Activated CD8-positive, alpha-beta T cell treated with anti-CD3 and anti-CD28 coated beads for 36 hours (primary cell): ENCODE measurements at regions of chr6 and their contacts with region 1.

Region 1: DNA sequence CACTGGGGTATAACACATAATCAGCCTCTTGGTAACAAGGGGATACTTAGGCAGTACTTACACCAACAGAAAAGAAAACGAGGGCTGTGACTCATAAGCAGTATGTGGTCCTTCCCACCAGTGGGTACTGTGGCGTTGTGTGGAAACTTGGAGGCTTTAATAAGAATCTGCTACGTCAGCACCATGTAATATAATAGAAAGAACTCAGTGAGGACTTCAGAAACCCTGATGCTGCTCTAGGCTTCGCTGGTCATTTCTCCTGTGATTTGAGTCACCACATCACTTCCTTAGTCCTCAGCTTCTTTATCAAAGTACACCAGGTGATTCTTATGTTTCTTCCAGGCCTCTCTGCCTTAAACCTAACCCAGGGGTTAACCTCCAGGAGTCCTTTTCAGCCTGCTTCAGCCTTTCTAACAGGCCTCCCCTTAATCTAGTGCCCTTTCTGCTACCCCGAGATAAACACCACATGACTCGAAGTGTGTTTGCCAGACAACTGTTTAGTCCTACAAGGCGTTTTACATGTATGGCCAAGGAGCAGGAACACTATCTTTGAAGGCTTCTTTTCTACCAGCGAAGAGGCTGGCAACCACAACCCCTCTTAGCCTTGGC is 68.5 kb downstream of the FYN start:
- DNase-seq: peak; percentile 94
- ATAC-seq: peak; percentile 57
- H3K4me3 Mint-ChIP-seq: peak overlapping the region; percentile 63
- H3K27ac Mint-ChIP-seq: peak overlapping the region; percentile 99
- H3K4me1 Mint-ChIP-seq: peaks cover 95% of the 10 kb centered on the region
- H3K27me3 Mint-ChIP-seq: no peaks in the 10 kb centered on the region
- CTCF ChIP-seq: no peak

Region 2: DNA sequence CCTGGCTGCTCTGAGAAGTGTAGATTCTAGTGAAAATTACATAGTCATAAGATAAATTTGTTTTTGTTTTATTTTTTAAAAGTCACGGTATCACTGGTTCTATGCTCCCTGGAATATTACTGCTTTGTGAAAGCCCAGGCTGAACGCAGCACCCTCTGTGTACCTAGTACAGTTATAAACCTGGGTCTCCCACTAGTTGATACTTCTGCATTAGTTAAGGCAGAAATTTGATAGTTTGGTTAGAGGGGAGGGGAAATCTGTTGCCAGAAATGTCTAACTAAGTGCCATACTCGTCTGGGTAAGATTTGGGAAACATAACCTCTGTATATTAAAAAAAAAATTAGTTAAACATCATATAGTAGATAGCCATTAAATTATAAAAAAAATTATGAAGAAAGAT is 88.4 kb before region 1 on chr6:
- CTCF ChIA-PET with region 1: no interaction called
- POLR2A ChIA-PET with region 1: no interaction called
- intact Hi-C with region 1: no loop called
- DNase-seq: no peak
- ATAC-seq: no peak
- H3K4me3 Mint-ChIP-seq: no peak overlapping the region
- H3K27ac Mint-ChIP-seq: peak overlapping the region; percentile 85
- H3K4me1 Mint-ChIP-seq: peaks cover 92% of the 10 kb centered on the region
- H3K27me3 Mint-ChIP-seq: no peaks in the 10 kb centered on the region
- CTCF ChIP-seq: no peak

Region 3: DNA sequence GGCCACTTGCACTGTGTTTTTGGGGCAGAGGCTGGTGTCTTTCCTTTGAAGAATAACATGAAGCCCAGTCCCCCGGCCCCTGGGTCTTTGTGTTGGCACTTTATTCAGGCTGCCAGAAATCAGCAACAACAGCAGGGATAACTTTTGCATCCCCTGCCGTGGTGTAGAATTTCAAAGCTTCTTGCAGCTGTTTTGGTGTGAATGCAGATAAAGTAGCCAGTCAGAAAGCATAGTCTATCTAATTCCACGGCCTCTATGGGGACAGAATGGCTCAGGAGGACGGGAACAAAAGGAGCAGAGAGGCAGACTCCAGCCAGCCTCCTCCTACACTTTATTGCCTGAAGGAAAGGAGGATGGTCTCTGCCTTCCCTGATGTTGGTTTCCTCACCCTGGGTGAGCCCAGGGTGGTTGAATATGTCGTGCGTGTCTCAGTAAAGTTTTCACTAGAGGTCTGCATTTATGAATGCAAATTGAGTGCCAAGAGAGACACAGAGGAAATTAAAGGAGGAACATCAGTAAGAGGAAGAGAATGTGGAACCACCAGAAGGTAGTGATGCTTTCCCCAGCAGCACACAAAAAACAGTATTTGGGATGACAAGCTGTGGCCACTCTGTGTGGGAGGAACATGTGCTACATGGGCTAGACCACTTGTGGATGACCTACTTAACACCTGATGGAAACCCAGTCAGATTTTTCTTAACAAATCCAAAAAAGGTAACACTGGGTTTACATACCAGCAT is 73.1 kb before region 1 on chr6:
- CTCF ChIA-PET with region 1: no interaction called
- POLR2A ChIA-PET with region 1: no interaction called
- intact Hi-C with region 1: no loop called
- DNase-seq: no peak
- ATAC-seq: peak; percentile 21
- H3K4me3 Mint-ChIP-seq: no peak overlapping the region
- H3K27ac Mint-ChIP-seq: peak overlapping the region; percentile 74
- H3K4me1 Mint-ChIP-seq: peaks cover 83% of the 10 kb centered on the region
- H3K27me3 Mint-ChIP-seq: no peaks in the 10 kb centered on the region
- CTCF ChIP-seq: no peak

Region 4: DNA sequence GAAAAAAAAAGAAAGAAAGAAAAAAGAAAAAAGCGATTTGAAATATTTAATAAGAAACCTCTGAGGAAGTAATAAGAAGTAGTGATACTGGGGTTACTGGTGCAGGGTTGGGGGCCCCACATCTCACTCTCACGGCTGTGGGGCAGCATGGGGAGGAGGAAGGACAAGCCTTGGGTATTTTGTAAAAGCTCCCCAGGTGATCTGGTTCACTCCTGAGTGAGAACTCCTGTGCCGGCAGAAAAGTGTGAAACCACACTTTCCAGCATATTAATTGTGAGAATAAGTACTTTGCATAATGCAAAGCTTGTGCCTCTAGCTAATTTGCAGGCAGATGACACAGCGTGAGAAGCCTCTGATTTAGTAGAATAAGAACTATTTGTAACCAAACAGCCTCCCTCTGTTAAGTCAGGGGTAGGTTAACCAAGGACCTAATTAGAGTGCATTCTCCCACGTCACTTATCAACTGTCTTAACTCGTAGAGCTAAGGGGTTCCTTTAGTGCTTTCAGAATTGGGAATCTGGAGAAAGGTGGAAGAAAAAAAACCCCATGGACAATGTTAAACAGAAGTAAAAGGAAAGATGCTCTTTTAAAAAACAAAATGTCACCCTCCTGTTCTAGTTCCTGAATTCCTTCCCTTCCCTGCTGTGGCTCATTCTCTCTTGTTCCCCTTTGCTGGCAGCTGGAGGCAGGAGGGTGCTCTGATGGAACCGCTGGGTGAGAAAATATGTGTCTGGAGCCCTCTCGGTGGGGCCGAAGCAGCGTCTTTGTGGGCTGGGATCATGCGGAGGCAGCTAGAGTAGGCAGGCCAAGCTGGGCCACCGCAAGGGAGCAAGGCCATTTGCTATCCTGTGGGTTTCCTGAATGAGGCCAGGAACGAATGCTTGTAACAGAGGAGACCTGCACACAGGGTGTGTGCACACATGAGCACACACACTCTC is 40.2 kb before region 1 on chr6:
- CTCF ChIA-PET with region 1: interaction called, 11 read pairs
- POLR2A ChIA-PET with region 1: interaction called, 35 read pairs
- intact Hi-C with region 1: loop called (anchors 2 kb)
- DNase-seq: peak; percentile 81
- ATAC-seq: peak; percentile 56
- H3K4me3 Mint-ChIP-seq: peak overlapping the region; percentile 62
- H3K27ac Mint-ChIP-seq: peak overlapping the region; percentile 99
- H3K4me1 Mint-ChIP-seq: peaks cover 98% of the 10 kb centered on the region
- H3K27me3 Mint-ChIP-seq: no peaks in the 10 kb centered on the region
- CTCF ChIP-seq: no peak

Region 5: DNA sequence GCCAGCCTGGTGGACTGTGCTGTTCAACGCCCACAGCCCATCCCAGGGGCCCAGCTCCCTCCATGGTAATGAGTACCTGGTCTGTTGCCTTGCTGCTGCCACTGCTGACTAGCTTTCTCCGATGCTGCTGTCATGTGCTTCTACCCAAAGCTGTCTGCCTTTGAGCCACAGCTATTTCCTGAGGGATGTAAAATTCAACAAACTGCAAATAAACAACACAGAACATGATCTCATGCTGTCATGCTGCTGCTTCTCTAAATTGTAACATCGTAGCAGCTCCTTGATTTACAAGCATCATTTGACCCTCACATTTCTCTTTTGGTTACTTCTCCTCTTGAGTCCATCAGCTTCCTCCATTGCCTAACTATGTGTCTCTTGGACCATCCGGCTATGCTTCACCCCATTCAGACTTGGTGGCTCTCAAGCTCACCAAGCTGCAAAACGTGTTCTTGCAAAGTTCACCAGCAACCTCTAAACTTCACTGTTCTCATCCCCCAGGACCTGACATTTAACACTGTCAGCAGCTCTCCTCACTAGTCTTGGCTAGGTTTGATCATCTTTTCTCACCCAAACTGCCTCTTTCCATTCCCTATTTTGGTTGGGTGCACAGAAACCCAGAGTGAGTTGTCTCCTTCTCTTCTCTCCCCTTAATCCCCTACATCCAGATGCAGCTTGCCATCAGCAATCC is 14.0 kb after region 1 on chr6:
- CTCF ChIA-PET with region 1: interaction called, 39 read pairs
- POLR2A ChIA-PET with region 1: interaction called, 64 read pairs
- intact Hi-C with region 1: no loop called
- DNase-seq: peak; percentile 49
- ATAC-seq: peak; percentile 57
- H3K4me3 Mint-ChIP-seq: peak overlapping the region; percentile 37
- H3K27ac Mint-ChIP-seq: peak overlapping the region; percentile 90
- H3K4me1 Mint-ChIP-seq: peaks cover 72% of the 10 kb centered on the region
- H3K27me3 Mint-ChIP-seq: no peaks in the 10 kb centered on the region
- CTCF ChIP-seq: no peak

Region 6: GRCh38 chr6:111861431-111861885 is 56.7 kb after region 1 on chr6:
- CTCF ChIA-PET with region 1: interaction called, 3 read pairs
- POLR2A ChIA-PET with region 1: interaction called, 29 read pairs
- intact Hi-C with region 1: no loop called
- DNase-seq: no peak
- ATAC-seq: peak; percentile 41
- H3K4me3 Mint-ChIP-seq: peak overlapping the region; percentile 35
- H3K27ac Mint-ChIP-seq: peak overlapping the region; percentile 91
- H3K4me1 Mint-ChIP-seq: peaks cover 99% of the 10 kb centered on the region
- H3K27me3 Mint-ChIP-seq: no peaks in the 10 kb centered on the region
- CTCF ChIP-seq: no peak

Region 7: DNA sequence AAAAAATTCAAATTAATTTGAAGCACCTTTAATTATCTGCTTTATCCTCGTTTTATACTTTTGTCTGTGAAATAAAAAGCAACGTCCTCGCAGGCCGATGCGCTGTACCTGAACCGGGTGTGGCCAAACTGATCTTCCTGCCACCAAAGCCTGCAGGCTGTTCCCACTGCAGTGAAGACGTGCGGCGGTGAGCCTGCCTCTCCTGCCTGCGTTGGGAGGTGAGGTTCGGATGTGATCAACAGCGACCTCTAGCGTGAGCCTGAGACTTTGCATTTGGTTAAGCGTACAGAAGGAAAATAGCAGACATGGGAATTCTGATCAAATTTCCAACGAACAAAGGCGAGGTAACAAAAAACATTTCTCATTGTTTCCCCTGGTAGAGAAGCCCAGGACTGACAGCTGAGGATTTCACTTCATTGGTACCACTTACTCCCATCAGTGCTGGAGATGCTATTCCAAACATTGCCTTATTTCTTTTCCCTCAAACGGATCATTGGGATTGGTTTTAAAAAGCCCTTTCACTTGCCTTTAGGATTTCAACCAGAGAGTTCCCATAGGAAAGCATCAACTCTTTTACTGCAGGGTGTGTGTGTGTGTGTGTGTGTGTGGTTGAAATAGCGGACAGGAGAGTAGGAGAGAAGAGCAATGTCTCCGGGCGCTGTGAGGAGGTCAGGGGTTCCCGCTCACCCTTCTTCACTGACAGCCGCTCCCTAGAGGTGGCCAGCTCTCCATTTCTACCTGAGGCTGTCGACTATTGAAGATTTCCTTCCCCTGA is 192.5 kb after region 1 on chr6:
- CTCF ChIA-PET with region 1: interaction called, 5 read pairs
- POLR2A ChIA-PET with region 1: interaction called, 5 read pairs
- intact Hi-C with region 1: loop called (anchors 5 kb)
- DNase-seq: peak; percentile 84
- ATAC-seq: peak; percentile 65
- H3K4me3 Mint-ChIP-seq: peak overlapping the region; percentile 55
- H3K27ac Mint-ChIP-seq: peak overlapping the region; percentile 79
- H3K4me1 Mint-ChIP-seq: peaks cover 47% of the 10 kb centered on the region
- H3K27me3 Mint-ChIP-seq: no peaks in the 10 kb centered on the region
- CTCF ChIP-seq: peak; percentile 99